ENCODE measurements at regions of chr17 and their contacts with region 1.

Region 1: DNA sequence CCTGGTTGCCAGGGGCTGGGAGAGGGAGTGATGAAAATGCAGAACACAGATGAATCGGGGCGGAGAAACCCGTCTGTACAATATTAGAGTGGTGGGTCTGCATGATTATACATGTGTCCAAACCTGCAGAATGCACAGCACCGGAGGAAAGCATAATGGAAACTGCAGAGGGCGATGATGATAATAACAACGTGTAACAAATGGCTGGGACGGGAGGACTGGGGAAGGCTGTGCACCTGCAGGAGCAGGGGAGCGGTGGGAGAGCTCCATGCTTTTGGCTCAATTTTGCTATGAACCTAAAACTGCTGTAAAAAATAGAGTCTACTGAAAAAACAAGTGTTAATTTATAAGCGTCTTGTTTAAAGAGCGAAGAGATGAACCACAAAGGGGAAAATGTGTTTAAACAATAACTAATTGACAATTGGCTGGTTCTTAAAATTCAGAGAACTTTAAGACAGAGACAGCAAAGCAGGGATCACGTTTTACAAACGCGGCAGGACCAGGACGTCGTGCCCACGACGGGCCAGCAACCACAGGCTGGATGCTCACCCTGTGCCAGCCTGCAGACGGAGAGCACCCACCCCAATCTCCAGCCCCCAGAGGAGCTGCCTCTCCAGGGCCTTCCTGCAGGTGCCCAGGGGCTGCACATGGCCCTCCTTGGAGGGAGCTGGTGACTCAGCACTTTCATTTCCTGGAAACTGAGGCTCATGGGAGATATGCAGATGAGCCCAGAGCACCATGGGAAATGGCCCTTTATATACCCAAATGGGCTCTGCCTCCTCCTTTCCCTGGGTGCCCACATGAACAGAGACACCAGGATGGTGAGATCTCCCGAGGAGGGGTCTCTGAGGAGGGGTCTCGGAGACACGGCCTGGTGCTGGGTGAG is at the start of gene TEX19:
- DNase-seq: peak; percentile 82
- H3K4me3 ChIP-seq: peak within 1 kb of the TSS; percentile 13
- H3K27ac ChIP-seq: peak within 1 kb of the TSS; percentile 59
- H3K4me1 ChIP-seq: peaks cover 54% of the 10 kb centered on the region
- CTCF ChIP-seq: peak; percentile 69
- total RNA-seq, gene TEX19: 2.6 and 3.4 TPM in 2 replicates

Region 2: GRCh38 chr17:82065638-82066303 is 292.9 kb before region 1 on chr17 and contains the start of gene DUS1L:
- CTCF ChIA-PET with region 1: no interaction called
- POLR2A ChIA-PET with region 1: no interaction called
- intact Hi-C with region 1: no loop called
- DNase-seq: peak; percentile 84
- H3K4me3 ChIP-seq: peak within 1 kb of the TSS; percentile 97
- H3K27ac ChIP-seq: peak within 1 kb of the TSS; percentile 42
- H3K4me1 ChIP-seq: peaks cover 19% of the 10 kb centered on the region
- CTCF ChIP-seq: no peak
- total RNA-seq, gene DUS1L: 374 and 388 TPM in 2 replicates

Region 3: GRCh38 chr17:82370471-82371332 is 12.0 kb after region 1 on chr17:
- CTCF ChIA-PET with region 1: interaction called, 3 read pairs
- POLR2A ChIA-PET with region 1: interaction called, 15 read pairs
- intact Hi-C with region 1: no loop called
- DNase-seq: peak; percentile 87
- H3K4me3 ChIP-seq: peak overlapping the region; percentile 48
- H3K27ac ChIP-seq: peak overlapping the region; percentile 80
- H3K4me1 ChIP-seq: peaks cover 59% of the 10 kb centered on the region
- CTCF ChIP-seq: no peak

Measured in OCI-LY7 (cell line).